ENCODE measurements at regions of chr4 and their contacts with region 1.

Region 1: GRCh38 chr4:82373816-82374625 is at the start of gene HNRNPD:
- DNase-seq: peak; percentile 98
- ATAC-seq: peak; percentile 98
- total RNA-seq, gene HNRNPD: 111 TPM

Region 2: GRCh38 chr4:82149750-82150149 is 224.3 kb before region 1 on chr4:
- intact Hi-C with region 1: no loop called
- DNase-seq: no peak
- ATAC-seq: no peak

Region 3: GRCh38 chr4:82284858-82285805 is 88.9 kb before region 1 on chr4:
- intact Hi-C with region 1: loop called (anchors 5 kb)
- DNase-seq: peak; percentile 99
- ATAC-seq: peak; percentile 100

Measured in Right ventricle myocardium inferior (tissue), 1 donor.